GM12878 (cell line): ENCODE measurements at regions of chr6 and their contacts with region 1.

Region 1: DNA sequence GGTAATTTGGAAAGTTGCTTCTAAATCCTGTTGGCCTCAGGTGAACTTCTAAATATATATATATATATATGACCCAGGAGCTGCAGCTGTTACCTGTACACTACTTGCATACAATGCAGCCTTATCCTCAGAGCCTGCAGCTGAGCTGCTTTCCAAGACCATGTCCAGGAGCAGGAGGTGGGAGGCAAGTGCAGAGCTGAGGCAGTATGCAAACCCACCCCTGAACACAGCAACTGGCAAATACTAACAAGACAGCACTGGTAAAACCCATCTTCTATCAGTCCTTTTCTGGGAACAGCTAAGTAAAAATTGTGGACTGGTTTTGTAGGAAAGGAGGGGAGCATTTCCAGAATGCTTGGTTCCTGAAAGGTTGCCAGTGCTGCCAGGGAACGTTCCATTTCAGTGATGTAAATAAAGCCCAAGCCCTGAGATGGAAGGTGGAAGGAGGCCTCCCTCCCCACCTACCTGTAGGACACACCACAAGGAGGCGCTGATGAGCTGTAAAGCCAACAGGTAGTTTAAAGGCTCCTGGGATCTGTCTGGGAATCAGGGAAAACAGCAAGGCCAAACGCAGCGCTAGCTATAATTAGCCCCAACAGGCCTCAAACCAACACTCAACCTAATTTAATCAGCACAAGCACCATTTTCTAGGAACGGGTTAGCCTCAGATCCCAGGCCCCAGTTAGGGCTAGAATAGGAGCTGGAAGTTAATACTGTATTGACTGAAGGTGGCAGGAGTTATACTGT is 93.8 kb upstream of the MAP7 start:
- DNase-seq: peak; percentile 40
- ATAC-seq: peak; percentile 90
- H3K4me3 ChIP-seq: no peak overlapping the region
- H3K27ac ChIP-seq: no peak overlapping the region
- H3K4me1 ChIP-seq: no peaks in the 10 kb centered on the region
- H3K27me3 ChIP-seq: no peaks in the 10 kb centered on the region
- CTCF ChIP-seq: peak; percentile 85 to 92 (median 87)
- EP300 ChIP-seq: no peak
- POLR2A ChIP-seq: no peak
- RAD21 ChIP-seq: peak; percentile 97

Region 2: DNA sequence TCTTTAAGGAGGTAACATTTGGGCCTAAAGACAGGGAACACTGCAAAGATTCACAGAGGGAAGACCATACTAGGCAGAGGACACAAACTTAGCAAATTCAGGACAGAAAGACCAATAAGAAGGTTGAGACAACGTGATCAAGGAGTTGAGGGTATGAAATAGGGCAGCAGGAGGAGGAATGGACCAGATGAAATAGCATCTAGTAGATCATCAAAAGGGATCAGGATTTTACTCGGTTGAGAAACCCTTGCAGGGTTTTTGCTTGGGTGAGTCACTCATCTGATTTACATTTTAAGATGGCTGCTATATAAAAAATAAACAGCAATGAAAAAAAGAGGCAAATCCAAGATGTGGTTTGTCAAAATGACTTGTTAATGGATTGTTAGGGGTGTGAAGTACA is 359.1 kb before region 1 on chr6:
- CTCF ChIA-PET with region 1: no interaction called
- POLR2A ChIA-PET with region 1: no interaction called
- RAD21 ChIA-PET with region 1: no interaction called
- SMC1A ChIA-PET with region 1: no interaction called
- in situ Hi-C with region 1: no loop called
- intact Hi-C with region 1: no loop called
- DNase-seq: no peak
- ATAC-seq: no peak
- H3K4me3 ChIP-seq: peak overlapping the region; percentile 42; the same call in 1 of the 2 replicates
- H3K27ac ChIP-seq: no peak overlapping the region
- H3K4me1 ChIP-seq: peaks cover 5% of the 10 kb centered on the region; the same call in 1 of the 2 replicates
- H3K27me3 ChIP-seq: no peaks in the 10 kb centered on the region
- CTCF ChIP-seq: no peak
- EP300 ChIP-seq: no peak
- POLR2A ChIP-seq: no peak
- RAD21 ChIP-seq: no peak

Region 3: DNA sequence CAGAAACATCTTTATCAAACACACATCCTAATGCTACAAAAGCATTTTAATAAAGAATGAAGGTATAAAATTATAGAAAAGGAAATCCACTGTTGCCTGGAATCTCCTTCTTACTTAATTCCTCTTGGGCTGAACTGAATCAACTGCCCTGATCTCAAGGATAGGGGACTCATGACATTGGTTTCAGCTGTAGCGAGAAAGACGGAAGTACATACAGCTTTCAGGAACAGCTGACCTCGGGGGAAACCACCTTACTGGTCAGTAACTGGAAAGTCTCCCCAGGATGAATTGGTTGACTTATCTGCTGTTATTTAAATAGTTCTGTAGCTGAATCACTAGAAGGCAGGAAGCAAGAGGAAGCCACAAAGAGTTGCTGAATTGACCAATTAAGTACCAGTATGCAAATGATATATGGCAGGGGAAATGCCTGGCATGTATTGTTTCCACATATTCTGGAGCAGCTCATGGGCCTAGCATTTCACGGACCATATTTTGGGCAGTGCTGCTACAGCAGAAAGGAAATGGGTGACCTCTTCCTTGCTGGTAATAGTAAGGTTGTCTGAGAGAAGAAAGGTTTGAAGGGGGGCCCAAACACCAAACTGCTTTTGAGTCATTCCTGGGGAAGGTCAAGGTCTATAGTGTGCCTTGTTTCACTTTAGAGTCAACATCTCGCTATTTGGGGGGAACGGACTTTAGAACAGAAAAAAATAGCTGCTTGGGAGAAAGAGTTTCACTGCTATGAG is 50.1 kb before region 1 on chr6:
- CTCF ChIA-PET with region 1: interaction called, 14 read pairs
- POLR2A ChIA-PET with region 1: no interaction called
- RAD21 ChIA-PET with region 1: interaction called, 3 read pairs
- SMC1A ChIA-PET with region 1: interaction called, 7 read pairs
- in situ Hi-C with region 1: no loop called
- intact Hi-C with region 1: no loop called
- DNase-seq: peak; percentile 94
- ATAC-seq: peak; percentile 97
- H3K4me3 ChIP-seq: 0 out of 2 replicates have a peak overlapping the region, but pooled peaks have one; percentile 20
- H3K27ac ChIP-seq: peak overlapping the region; percentile 83
- H3K4me1 ChIP-seq: peaks cover 13% of the 10 kb centered on the region; the same call in 1 of the 2 replicates
- H3K27me3 ChIP-seq: no peaks in the 10 kb centered on the region
- CTCF ChIP-seq: no peak
- EP300 ChIP-seq: peak in 1 of 2 experiments; percentile 55; a peak in 2 of 4 replicates
- POLR2A ChIP-seq: 0 out of 2 replicates have a peak, but pooled peaks have one; percentile 39
- RAD21 ChIP-seq: no peak

Region 4: DNA sequence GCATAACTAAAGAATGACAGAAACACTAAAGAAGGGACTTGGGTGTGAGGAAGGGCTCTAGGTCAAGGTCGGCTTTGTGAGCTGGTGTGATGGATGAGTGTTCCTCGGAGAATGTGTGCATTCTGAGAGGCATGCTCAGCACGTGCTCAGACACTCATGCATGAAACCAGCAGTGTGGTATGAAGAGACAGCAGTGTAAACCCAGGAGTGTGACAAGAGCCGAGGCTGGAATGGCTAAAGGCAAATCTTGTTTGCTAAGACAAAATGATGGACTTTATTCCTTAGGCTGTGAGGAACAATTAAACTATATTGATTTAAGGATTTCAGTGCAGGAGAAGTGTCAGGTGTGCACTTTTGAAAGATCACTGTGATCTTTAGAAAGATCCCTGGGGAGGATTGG is 13.6 kb after region 1 on chr6:
- CTCF ChIA-PET with region 1: interaction called, 42 read pairs
- POLR2A ChIA-PET with region 1: no interaction called
- RAD21 ChIA-PET with region 1: interaction called, 4 read pairs
- SMC1A ChIA-PET with region 1: interaction called, 6 read pairs
- in situ Hi-C with region 1: no loop called
- intact Hi-C with region 1: no loop called
- DNase-seq: no peak
- ATAC-seq: no peak
- H3K4me3 ChIP-seq: no peak overlapping the region
- H3K27ac ChIP-seq: no peak overlapping the region
- H3K4me1 ChIP-seq: no peaks in the 10 kb centered on the region
- H3K27me3 ChIP-seq: no peaks in the 10 kb centered on the region
- CTCF ChIP-seq: no peak
- EP300 ChIP-seq: no peak
- POLR2A ChIP-seq: no peak
- RAD21 ChIP-seq: no peak

Region 5: DNA sequence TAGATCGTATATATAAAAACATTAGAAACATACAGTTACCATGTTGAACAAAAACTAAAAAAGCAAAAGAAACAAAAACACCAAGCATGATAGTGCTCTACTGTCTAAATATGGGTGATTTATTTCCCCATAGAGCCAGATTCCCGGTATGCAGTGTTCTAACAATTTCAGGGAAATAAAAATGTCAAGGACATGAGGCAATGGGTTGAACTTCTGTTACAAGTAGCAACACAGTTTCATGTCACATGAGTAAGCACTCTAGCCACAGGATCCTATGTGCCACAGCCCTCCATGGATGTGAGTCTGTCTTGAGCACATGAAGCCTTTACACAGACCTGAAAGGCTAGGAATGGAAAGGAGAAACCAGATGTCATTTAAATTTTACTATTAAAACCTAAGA is 52.2 kb after region 1 on chr6:
- CTCF ChIA-PET with region 1: interaction called, 11 read pairs
- POLR2A ChIA-PET with region 1: no interaction called
- RAD21 ChIA-PET with region 1: no interaction called
- SMC1A ChIA-PET with region 1: interaction called, 7 read pairs
- in situ Hi-C with region 1: no loop called
- intact Hi-C with region 1: no loop called
- DNase-seq: no peak
- ATAC-seq: no peak
- H3K4me3 ChIP-seq: no peak overlapping the region
- H3K27ac ChIP-seq: no peak overlapping the region
- H3K4me1 ChIP-seq: no peaks in the 10 kb centered on the region
- H3K27me3 ChIP-seq: no peaks in the 10 kb centered on the region
- CTCF ChIP-seq: no peak
- EP300 ChIP-seq: no peak
- POLR2A ChIP-seq: no peak
- RAD21 ChIP-seq: no peak

Region 6: GRCh38 chr6:136728976-136729515 is 85.0 kb after region 1 on chr6:
- CTCF ChIA-PET with region 1: interaction called, 13 read pairs
- POLR2A ChIA-PET with region 1: interaction called, 3 read pairs
- RAD21 ChIA-PET with region 1: interaction called, 8 read pairs
- SMC1A ChIA-PET with region 1: interaction called, 14 read pairs
- in situ Hi-C with region 1: no loop called
- intact Hi-C with region 1: no loop called
- DNase-seq: no peak
- ATAC-seq: no peak
- H3K4me3 ChIP-seq: no peak overlapping the region
- H3K27ac ChIP-seq: no peak overlapping the region
- H3K4me1 ChIP-seq: peaks cover 25% of the 10 kb centered on the region
- H3K27me3 ChIP-seq: no peaks in the 10 kb centered on the region
- CTCF ChIP-seq: no peak
- EP300 ChIP-seq: no peak
- POLR2A ChIP-seq: no peak
- RAD21 ChIP-seq: no peak

Region 7: DNA sequence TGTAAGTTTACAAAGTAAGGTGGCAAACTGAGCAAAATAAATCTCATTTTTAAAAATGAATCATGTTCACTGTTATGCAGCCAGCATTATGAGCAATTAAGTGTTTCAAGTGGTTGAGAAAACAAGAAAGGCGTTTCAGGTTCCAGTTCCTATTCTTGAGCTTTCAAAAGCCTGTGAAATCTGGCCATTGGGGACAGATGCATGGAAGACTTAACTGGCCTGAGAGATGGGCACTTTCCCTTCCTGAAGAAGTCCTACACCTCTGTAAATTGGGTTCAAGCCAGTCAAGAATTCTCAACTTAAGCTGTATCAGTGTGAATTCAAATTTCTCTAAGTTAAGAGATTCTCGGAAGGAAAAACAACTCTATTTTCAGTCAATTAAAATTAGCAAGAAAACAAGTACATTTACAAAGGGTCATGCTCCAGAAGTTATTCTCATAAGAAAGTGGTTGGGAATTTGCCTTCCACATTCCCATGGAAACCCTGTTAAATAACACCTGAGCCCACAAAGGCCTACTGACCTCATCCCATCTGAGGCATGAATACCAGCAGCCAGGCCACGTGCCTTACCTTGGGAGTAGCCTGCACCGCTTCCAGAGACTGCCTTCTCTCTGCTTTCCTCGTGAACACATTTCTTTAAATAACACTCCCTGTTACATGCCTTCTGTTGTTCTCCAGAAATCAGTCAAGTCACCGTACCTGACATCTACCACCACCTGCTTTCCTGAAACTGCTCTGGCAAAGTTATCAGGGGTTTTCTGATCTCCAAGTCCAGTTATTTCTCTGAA is 128.9 kb after region 1 on chr6:
- CTCF ChIA-PET with region 1: interaction called, 16 read pairs
- POLR2A ChIA-PET with region 1: no interaction called
- RAD21 ChIA-PET with region 1: interaction called, 12 read pairs
- SMC1A ChIA-PET with region 1: interaction called, 12 read pairs
- in situ Hi-C with region 1: no loop called
- intact Hi-C with region 1: no loop called
- DNase-seq: peak; percentile 93
- ATAC-seq: peak; percentile 75
- H3K4me3 ChIP-seq: peak overlapping the region; percentile 49
- H3K27ac ChIP-seq: peak overlapping the region; percentile 92
- H3K4me1 ChIP-seq: peaks cover 57% of the 10 kb centered on the region
- H3K27me3 ChIP-seq: no peaks in the 10 kb centered on the region
- CTCF ChIP-seq: no peak
- EP300 ChIP-seq: peak; percentile 50 to 93; a peak in 3 of 4 replicates
- POLR2A ChIP-seq: peak; percentile 38; the same call in 1 of the 2 replicates
- RAD21 ChIP-seq: no peak; the same call in 1 of the 2 replicates

Region 8: GRCh38 chr6:136822376-136823127 is 178.5 kb after region 1 on chr6 and contains the start of gene PEX7:
- CTCF ChIA-PET with region 1: interaction called, 11 read pairs
- POLR2A ChIA-PET with region 1: no interaction called
- RAD21 ChIA-PET with region 1: interaction called, 14 read pairs
- SMC1A ChIA-PET with region 1: interaction called, 7 read pairs
- in situ Hi-C with region 1: no loop called
- intact Hi-C with region 1: no loop called
- DNase-seq: peak; percentile 67
- ATAC-seq: peak; percentile 98
- H3K4me3 ChIP-seq: peak within 1 kb of the TSS; percentile 83
- H3K27ac ChIP-seq: peak within 1 kb of the TSS; percentile 76
- H3K4me1 ChIP-seq: no peaks in the 10 kb centered on the region
- H3K27me3 ChIP-seq: no peaks in the 10 kb centered on the region
- CTCF ChIP-seq: peak; percentile 68 to 84 (median 72)
- EP300 ChIP-seq: peak in 1 of 2 experiments; percentile 2; a peak in 1 of 4 replicates
- POLR2A ChIP-seq: peak; percentile 90
- RAD21 ChIP-seq: peak; percentile 32; the same call in 1 of the 2 replicates
- polyA plus RNA-seq, gene PEX7: 0.58 to 2.7 TPM